ENCODE measurements at regions of chr19 and their contacts with region 1.

Region 1: DNA sequence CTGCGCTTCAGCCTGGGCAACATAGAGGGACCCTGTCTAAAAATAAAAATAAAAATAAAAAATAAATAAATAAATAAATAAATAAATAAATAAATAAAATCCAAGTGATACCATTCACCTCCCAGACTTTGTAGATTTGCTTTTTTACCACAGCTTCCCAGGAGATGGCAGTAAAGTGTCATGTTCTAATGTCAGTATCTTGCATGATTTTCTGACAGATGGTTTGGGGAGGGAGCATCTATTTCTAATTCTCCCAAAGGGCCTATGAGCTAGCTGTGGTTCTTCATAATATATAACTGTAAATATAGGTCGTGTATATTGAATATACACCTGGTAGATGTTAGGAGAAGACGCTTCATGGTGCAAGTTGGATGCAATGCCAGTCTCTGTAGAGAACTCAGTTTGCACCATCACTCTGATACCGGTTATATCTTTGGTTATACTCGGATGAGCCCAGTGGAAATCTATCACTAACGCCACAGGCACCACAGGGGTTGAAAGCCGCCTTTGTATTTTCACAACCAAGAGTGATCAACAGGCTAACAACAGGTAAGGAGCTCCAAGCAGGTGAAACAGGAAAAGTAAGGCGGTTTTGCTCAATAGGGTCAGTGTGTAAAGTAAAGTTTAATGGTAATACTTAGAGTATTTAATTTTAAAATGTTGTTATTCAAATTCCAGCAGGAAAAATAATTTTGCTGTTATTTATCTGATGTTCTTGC is 13.9 kb downstream of the APLP1 start:
- DNase-seq: peak; percentile 35
- ATAC-seq: peak; percentile 53
- H3K4me3 Mint-ChIP-seq: no peak overlapping the region
- H3K27ac Mint-ChIP-seq: no peak overlapping the region
- H3K4me1 Mint-ChIP-seq: peaks cover 2% of the 10 kb centered on the region
- H3K27me3 Mint-ChIP-seq: peaks cover 12% of the 10 kb centered on the region

Region 2: DNA sequence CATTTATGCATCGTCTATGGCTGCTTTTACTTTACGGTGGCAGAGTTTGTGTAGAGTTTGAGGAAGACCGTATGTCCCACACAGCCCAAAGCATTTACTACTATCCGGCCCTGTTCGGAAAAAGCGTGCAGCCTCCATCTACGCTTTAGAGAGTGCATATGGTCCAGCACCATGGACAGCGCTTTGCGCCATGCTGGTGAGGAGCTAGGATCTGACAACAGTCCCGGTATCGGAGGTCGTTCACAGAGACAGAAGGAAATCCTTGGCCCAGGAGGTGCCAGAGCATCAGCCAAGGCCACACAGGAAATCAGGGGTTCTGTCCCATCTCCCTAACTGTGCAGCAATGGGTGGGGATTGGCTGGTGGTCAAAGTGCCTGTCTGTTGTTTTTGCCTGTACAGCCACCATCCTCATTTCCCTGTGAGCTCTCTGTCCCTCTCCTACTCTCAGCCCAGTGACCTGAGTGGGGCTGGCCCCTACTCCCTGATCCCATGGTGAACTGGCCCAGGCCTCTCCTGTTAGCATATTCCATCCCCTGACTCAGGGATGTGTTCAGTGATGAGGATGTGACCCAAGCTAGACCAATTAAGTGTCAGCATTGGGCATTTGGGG is 53.5 kb before region 1 on chr19:
- CTCF ChIA-PET with region 1: no interaction called
- POLR2A ChIA-PET with region 1: no interaction called
- intact Hi-C with region 1: loop called in 1 of 2 experiments (anchors 1 kb)
- DNase-seq: peak; percentile 80
- ATAC-seq: peak; percentile 63
- H3K4me3 Mint-ChIP-seq: no peak overlapping the region
- H3K27ac Mint-ChIP-seq: no peak overlapping the region
- H3K4me1 Mint-ChIP-seq: no peaks in the 10 kb centered on the region
- H3K27me3 Mint-ChIP-seq: peaks cover 30% of the 10 kb centered on the region

Region 3: GRCh38 chr19:35869327-35870123 is 12.7 kb before region 1 on chr19:
- CTCF ChIA-PET with region 1: interaction called, 3 read pairs
- POLR2A ChIA-PET with region 1: interaction called, 4 read pairs
- intact Hi-C with region 1: loop called in 1 of 2 experiments (anchors 1 kb)
- DNase-seq: peak; percentile 95
- ATAC-seq: peak; percentile 93
- H3K4me3 Mint-ChIP-seq: peak overlapping the region; percentile 52
- H3K27ac Mint-ChIP-seq: no peak overlapping the region
- H3K4me1 Mint-ChIP-seq: peaks cover 14% of the 10 kb centered on the region
- H3K27me3 Mint-ChIP-seq: peaks cover 37% of the 10 kb centered on the region

Measured in activated CD4-positive, alpha-beta T cell treated with anti-CD3 and anti-CD28 coated beads for 36 hours (primary cell).